CD4-positive, alpha-beta memory T cell (primary cell): ENCODE measurements at regions of chr12 and their contacts with region 1.

Region 1: DNA sequence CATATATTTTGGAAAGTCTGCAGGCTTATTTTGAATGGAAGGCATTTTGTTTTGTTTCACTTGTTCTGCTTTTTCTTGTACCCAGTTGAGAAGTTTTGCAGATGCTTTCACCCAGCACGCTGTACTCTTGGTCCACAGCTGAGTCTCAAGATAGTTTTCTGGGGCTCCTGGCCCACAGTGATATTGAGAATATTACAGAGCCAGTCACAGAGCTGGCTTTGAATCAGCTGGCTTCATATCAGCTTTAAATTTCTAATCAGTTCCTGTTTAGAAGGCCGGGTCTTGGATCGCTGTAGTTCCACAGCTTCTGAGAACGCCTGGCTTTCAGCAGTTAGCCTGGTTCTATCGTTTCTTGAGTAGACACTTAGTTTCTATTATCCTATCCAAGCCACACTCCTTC is 32.5 kb upstream of the PARP11 start:
- DNase-seq: no peak
- H3K4me3 ChIP-seq: peak overlapping the region; percentile 34 to 36
- H3K4me3 Mint-ChIP-seq: peak overlapping the region; percentile 57 to 91 (median 86)
- H3K27ac ChIP-seq: peak overlapping the region; percentile 20
- H3K27ac Mint-ChIP-seq: peak overlapping the region; percentile 63 to 94 (median 83)
- H3K4me1 ChIP-seq: peaks cover 33% of the 10 kb centered on the region
- H3K4me1 Mint-ChIP-seq: peaks cover 23 to 45% (median 30%) of the 10 kb centered on the region in 4 donors
- H3K27me3 ChIP-seq: no peaks in the 10 kb centered on the region
- H3K27me3 Mint-ChIP-seq: no peaks in the 10 kb centered on the region

Region 2: DNA sequence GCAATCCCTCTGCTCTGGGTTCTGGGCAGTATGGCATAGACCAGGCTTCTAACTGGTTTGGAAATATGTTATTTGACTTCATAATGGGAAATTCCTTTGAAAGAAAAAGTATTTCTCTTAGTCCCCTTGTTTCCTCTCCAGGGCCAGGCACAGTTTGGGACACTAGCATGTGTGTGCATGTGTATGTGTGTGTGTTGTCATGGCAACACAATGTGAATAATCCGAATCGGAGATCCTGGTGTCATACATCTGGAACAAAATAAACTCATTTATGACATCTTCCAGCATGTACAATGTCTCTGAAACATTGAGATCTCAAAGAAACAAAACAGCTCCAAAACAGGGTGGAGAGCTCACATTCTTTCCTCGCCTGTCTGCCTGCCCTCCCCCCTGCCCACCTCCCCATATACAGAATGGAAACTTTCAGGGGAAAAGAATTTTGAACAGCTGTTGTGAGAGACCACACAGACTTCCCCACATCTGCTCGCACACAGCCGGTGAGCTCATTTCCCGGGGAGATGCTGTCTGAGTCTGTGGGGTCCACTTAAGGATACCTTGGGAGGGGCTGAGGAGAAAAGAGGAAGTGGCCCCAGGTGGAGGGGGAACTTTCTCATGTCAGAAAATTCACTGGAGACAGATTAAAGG is 23.0 kb after region 1 on chr12:
- CTCF ChIA-PET with region 1: interaction called, 4 read pairs
- POLR2A ChIA-PET with region 1: interaction called, 21 read pairs
- intact Hi-C with region 1: loop called (anchors 2 kb)
- DNase-seq: no peak
- H3K4me3 ChIP-seq: no peak overlapping the region
- H3K4me3 Mint-ChIP-seq: no peak overlapping the region
- H3K27ac ChIP-seq: no peak overlapping the region
- H3K27ac Mint-ChIP-seq: peak overlapping the region in 5 of 7 donors; percentile 19 to 84 (median 64)
- H3K4me1 ChIP-seq: peaks cover 41% of the 10 kb centered on the region
- H3K4me1 Mint-ChIP-seq: peaks cover 34 to 70% (median 56%) of the 10 kb centered on the region in 4 donors
- H3K27me3 ChIP-seq: no peaks in the 10 kb centered on the region
- H3K27me3 Mint-ChIP-seq: no peaks in the 10 kb centered on the region

Region 3: DNA sequence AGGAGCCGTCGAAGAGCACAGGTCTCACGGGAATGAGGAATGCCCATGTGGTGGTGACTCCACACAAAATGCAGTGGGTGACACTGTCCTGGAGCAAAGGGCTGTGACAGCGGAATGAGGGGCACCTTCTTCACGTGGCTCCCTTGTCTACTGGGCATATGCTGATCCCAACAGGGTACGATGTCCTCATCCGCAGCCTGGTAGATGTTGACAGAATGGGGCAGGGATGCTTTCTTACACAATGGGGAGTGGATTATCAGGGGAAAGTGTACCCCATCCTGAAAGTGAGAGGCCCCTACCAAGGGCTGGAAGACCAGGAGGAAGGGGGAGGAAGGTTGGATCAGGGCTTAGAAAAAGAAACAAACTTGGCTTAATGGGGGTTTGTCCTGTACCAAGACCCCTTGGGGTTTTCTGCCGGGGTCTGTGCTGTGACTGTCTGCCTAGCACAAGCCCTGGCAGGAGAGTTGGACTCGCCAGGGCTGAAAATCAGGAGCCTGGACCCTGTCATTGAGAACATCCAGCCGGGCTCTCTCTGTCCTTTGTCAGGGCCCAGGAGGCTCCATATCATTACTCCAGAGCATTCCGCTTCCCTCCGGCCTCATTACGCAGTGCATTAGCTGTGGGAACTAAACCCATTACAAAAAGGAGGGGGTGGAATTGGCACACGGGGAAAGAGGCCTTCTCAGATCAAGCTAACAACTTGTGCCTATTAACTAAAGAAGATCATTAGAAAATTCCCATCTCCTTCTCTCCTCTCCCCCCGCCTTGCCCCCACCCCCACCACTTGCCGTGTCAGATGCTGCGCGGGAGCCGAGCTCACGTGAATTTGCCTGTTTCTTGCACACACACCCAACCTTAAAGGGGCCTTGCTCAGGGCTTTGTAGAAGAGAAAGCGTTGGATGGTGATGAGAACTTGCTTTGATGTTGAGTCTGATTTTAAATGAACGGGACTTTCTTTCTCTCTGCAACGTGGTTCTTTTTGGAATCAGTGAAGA is 139.4 kb after region 1 on chr12:
- CTCF ChIA-PET with region 1: no interaction called
- POLR2A ChIA-PET with region 1: no interaction called
- intact Hi-C with region 1: no loop called
- DNase-seq: no peak
- H3K4me3 ChIP-seq: no peak overlapping the region
- H3K4me3 Mint-ChIP-seq: no peak overlapping the region
- H3K27ac ChIP-seq: no peak overlapping the region
- H3K27ac Mint-ChIP-seq: no peak overlapping the region
- H3K4me1 ChIP-seq: no peaks in the 10 kb centered on the region
- H3K4me1 Mint-ChIP-seq: peaks cover 0 to 3% (median 0%) of the 10 kb centered on the region in 4 donors
- H3K27me3 ChIP-seq: no peaks in the 10 kb centered on the region
- H3K27me3 Mint-ChIP-seq: no peaks in the 10 kb centered on the region